Right ventricle myocardium superior (tissue), 1 donor: ENCODE measurements at regions of chr13 and their contacts with region 1.

Region 1: GRCh38 chr13:48233046-48233907 is at the start of gene ITM2B:
- DNase-seq: peak; percentile 90
- ATAC-seq: peak; percentile 89
- total RNA-seq, gene ITM2B: 516 TPM

Region 2: GRCh38 chr13:48126944-48127830 is 106.1 kb before region 1 on chr13:
- intact Hi-C with region 1: loop called (anchors 5 kb)
- DNase-seq: peak; percentile 86
- ATAC-seq: peak; percentile 86

Region 3: DNA sequence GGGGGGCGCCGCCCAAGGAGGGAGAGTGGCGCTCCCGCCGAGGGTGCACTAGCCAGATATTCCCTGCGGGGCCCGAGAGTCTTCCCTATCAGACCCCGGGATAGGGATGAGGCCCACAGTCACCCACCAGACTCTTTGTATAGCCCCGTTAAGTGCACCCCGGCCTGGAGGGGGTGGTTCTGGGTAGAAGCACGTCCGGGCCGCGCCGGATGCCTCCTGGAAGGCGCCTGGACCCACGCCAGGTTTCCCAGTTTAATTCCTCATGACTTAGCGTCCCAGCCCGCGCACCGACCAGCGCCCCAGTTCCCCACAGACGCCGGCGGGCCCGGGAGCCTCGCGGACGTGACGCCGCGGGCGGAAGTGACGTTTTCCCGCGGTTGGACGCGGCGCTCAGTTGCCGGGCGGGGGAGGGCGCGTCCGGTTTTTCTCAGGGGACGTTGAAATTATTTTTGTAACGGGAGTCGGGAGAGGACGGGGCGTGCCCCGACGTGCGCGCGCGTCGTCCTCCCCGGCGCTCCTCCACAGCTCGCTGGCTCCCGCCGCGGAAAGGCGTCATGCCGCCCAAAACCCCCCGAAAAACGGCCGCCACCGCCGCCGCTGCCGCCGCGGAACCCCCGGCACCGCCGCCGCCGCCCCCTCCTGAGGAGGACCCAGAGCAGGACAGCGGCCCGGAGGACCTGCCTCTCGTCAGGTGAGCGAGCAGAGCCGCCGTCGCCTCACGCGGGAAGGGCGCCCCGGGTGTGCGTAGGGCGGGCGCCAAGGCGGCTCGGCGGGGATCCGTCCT is 70.3 kb after region 1 on chr13 and contains the start of gene RB1:
- intact Hi-C with region 1: loop called (anchors 10 kb)
- DNase-seq: peak; percentile 96
- ATAC-seq: peak; percentile 95
- total RNA-seq, gene RB1: 24.4 TPM